ENCODE measurements at regions of chr3 and their contacts with region 1.

Region 1: DNA sequence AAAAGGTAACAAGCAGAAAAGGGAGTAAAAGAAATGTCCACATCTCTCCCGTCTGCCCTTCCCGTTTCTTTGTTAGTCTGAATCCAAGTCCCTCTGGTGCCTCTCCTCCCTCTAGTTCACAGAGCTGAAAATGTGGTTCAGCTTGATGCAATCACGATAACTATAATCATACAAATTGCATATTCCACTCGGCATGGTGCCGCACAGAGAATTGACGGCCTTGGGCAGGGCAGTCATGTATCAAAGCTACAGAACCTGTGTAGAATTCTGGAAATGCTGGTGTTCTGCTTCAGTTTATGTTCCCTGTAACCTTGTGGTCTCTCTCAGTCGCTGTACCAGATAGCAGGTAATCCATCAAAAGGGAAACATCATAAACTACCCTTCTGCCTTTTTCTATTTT is 562.9 kb upstream of the CBLB start:
- DNase-seq: peak in 1 of 2 donors; percentile 16
- ATAC-seq: no peak
- H3K4me3 ChIP-seq: no peak overlapping the region
- H3K27ac ChIP-seq: no peak overlapping the region
- H3K4me1 ChIP-seq: no peaks in the 10 kb centered on the region
- H3K27me3 ChIP-seq: no peaks in the 10 kb centered on the region
- CTCF ChIP-seq: no peak

Region 2: DNA sequence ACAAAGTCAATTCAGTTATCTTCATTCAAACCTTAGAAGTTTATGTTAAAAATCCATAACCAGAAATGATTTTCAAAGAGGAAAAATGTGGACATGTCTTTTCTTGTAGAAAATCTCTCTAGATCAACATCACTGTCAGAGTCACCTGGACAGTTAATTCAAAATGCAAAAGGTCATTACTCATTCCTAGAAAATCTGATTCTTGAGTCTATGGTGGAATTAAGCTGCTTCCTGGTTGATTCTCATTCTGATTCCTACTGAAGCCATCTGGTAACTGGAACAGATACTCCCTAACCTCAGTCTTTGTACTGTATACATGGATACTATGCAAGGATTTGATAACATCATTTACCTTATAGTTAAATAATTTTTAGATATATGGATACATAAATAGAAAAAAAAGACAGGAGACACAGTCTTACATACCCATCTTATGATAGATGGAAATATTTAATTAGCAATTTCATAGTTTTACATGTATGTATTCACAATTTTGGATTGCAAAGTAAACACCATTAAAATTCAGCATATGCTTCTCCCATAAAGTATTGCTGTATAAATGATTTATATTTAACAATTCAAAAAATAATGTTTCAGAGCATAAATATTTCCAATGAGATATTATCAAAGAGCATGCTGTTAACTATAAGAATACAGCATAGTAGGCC is 252.4 kb after region 1 on chr3:
- intact Hi-C with region 1: loop called in 1 of 2 experiments (anchors 5 kb)
- DNase-seq: no peak
- ATAC-seq: no peak
- H3K4me3 ChIP-seq: no peak overlapping the region
- H3K27ac ChIP-seq: no peak overlapping the region
- H3K4me1 ChIP-seq: no peaks in the 10 kb centered on the region
- H3K27me3 ChIP-seq: no peaks in the 10 kb centered on the region
- CTCF ChIP-seq: no peak